RWPE1 (cell line): ENCODE measurements at regions of chr1 and their contacts with region 1.

Region 1: GRCh38 chr1:221761354-221762002 is 19.6 kb upstream of the DUSP10 start:
- DNase-seq: no peak
- H3K27ac ChIP-seq: no peak overlapping the region
- CTCF ChIP-seq: no peak

Region 2: DNA sequence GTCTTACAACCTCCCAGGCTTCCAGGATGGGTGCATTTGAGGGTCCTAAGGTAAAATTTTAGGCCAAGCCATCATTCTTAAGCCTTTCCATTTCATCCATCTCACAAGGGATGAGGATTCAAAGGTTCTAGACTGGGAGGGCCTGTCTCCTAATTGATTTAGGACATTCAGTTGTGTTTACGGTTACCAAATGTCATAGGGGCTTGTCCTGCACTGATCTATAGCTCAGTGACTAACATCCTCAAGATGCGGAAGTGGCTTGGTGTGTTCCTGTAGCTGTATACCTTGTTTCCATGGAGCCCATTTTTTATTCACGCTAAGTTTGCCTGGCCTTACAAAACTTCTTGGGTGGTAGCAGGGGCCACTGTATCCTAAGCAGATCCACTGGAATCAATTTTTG is 72.3 kb before region 1 on chr1:
- CTCF ChIA-PET with region 1: interaction called, 10 read pairs
- POLR2A ChIA-PET with region 1: no interaction called
- DNase-seq: no peak
- H3K27ac ChIP-seq: no peak overlapping the region
- CTCF ChIP-seq: no peak

Region 3: GRCh38 chr1:221751226-221751887 is 10.1 kb before region 1 on chr1:
- CTCF ChIA-PET with region 1: no interaction called
- POLR2A ChIA-PET with region 1: no interaction called
- DNase-seq: no peak
- H3K27ac ChIP-seq: no peak overlapping the region
- CTCF ChIP-seq: no peak